ENCODE measurements at regions of chr12 and their contacts with region 1.

Region 1: DNA sequence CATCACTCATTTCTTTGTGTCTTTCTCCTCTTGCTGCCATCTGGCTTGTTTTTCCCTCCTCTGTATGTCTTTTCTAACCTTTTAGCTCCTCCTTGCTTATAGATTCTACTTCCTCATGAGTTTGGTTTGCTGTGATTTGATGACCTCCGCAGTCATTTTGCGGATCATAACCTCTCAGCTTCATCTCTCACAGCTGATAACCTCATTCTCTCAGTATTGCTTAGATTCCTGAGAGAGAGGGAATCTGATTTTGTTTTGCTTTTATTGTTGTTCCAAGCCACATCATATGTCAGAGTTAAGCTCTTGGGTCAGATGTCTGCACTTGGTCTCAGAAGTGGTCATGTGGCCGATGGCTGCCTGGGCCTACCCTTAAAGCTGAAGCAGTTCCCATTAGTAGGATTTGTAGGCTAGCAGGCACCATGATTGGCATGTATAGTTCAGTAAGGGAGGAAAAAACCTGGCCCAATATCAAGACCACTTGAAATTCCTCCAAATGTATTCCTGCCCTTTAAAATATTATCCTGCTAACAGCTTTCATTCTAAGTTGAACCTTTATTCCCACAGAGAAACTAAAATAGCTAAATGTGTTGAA is 13.5 kb downstream of the ZNF664 start:
- DNase-seq: no peak
- H3K4me3 ChIP-seq: no peak overlapping the region
- H3K27ac ChIP-seq: no peak overlapping the region
- H3K4me1 ChIP-seq: peaks cover 23 to 55% (median 35%) of the 10 kb centered on the region in 4 donors
- H3K27me3 ChIP-seq: no peaks in the 10 kb centered on the region
- CTCF ChIP-seq: no peak
- EP300 ChIP-seq: no peak
- POLR2A ChIP-seq: no peak

Region 2: GRCh38 chr12:123900871-123901376 is 85.5 kb before region 1 on chr12:
- intact Hi-C with region 1: loop called (anchors 5 kb)
- DNase-seq: peak in 1 of 2 donors; percentile 40
- H3K4me3 ChIP-seq: no peak overlapping the region
- H3K27ac ChIP-seq: no peak overlapping the region
- H3K4me1 ChIP-seq: no peaks in the 10 kb centered on the region
- H3K27me3 ChIP-seq: peaks cover 0 to 45% (median 11%) of the 10 kb centered on the region in 3 donors
- CTCF ChIP-seq: no peak
- EP300 ChIP-seq: no peak
- POLR2A ChIP-seq: no peak

Region 3: DNA sequence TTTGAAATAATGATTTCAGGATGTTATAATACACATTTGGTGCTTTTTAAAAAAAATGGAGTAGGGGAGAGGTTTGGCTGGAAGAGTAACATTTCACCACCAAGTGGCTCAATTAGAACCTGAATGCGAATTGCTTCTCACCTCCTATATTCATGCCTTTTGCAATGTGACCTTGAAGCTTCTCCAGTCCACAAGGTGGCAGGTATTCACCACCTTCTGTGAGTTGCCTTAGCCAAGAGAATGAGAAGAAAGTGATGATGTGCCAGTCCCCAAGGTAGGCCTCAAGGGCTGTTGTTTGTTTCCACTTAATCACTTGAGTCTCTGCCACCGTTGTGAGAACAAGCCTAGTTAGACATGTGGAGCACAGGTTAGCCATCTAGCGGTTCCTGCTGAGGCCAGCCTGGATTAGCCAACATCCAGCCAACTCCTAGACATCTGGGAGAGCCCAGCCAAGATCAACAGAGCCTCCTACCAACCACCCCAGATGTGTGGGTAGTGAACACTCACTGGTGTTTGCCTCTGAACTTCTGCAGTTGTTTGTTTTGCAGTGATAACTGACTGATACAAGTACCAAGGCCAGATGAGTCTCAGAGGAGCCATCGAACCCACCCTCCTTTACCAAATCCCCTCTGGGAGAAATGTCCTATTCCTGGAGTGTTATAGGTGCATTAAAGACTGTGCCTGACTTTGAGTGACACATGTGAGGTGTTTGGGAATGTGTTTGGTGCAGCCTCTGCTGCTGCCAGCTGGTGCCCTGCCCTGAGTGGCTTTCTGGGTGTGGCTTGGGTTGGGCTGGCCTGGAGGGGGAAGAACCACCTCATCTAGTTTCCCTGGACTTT is 175.9 kb after region 1 on chr12:
- intact Hi-C with region 1: no loop called
- DNase-seq: peak in 1 of 2 donors; percentile 39
- H3K4me3 ChIP-seq: no peak overlapping the region
- H3K27ac ChIP-seq: peak overlapping the region in 1 of 5 donors; percentile 15
- H3K4me1 ChIP-seq: peaks cover 0 to 5% (median 0%) of the 10 kb centered on the region in 4 donors
- H3K27me3 ChIP-seq: no peaks in the 10 kb centered on the region
- CTCF ChIP-seq: peak in 3 of 7 experiments; percentile 10 to 24 (median 20)
- EP300 ChIP-seq: no peak
- POLR2A ChIP-seq: no peak

Measured in stomach (tissue), 19 donors.